ENCODE measurements at regions of chr2 and their contacts with region 1.

Region 1: GRCh38 chr2:195656859-195657633 is at the start of gene SLC39A10:
- DNase-seq: peak; percentile 87
- CTCF ChIP-seq: no peak

Region 2: DNA sequence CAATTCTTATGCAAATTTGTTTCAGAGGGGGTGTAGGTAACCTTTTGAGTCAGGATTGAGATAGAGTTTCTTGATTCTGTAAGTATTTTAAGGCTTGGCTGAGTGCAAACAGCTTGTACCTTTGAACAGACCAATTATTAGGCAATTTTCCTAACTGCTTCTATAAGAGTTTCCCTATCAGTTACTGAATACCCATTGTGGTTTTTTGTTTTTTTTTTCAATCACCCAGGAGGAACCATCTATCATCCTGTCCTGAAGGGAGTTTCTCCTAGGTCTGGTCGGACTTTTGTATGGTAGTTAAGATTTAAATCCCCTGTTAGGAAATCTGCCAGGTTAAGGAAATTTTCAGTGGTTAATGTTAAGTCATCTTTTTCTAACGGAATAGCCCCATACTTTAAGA is 319.4 kb before region 1 on chr2:
- in situ Hi-C with region 1: loop called (anchors 10 kb)
- DNase-seq: no peak
- CTCF ChIP-seq: no peak

Region 3: DNA sequence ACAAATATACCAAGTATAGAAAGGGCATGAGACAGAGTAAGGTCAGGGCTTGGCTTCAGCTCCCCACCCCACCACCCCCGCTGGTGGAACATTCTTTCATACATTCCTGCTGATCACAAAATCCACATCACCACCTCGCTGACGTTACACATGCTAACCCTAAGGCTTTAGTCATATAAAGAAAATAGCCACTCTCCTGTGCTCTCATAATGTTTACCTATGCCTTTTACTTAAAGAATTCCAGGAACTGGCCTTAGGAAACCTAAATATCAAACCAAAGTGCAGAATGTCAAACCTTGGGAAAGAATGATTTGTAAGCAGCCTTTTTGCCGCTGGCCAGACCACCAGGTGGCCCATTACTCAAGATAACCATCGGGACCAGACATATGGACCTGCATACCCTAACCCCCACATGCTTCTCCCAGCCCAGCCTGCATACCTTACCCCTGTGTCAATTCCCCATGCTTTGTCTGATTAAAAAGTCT is 136.3 kb before region 1 on chr2:
- in situ Hi-C with region 1: loop called (anchors 25 kb)
- DNase-seq: no peak
- CTCF ChIP-seq: no peak

Measured in GM13976 (cell line).